A673 (cell line): ENCODE measurements at regions of chr21 and their contacts with region 1.

Region 1: GRCh38 chr21:41068967-41069642 is 98.9 kb upstream of the BACE2 start:
- DNase-seq: peak; percentile 56
- H3K4me3 ChIP-seq: no peak overlapping the region
- H3K27ac ChIP-seq: no peak overlapping the region
- H3K4me1 ChIP-seq: no peaks in the 10 kb centered on the region
- H3K27me3 ChIP-seq: no peaks in the 10 kb centered on the region
- CTCF ChIP-seq: peak; percentile 75

Region 2: GRCh38 chr21:40466893-40467501 is 602.1 kb before region 1 on chr21:
- CTCF ChIA-PET with region 1: no interaction called
- POLR2A ChIA-PET with region 1: no interaction called
- intact Hi-C with region 1: loop called (anchors 5 kb)
- DNase-seq: no peak
- H3K4me3 ChIP-seq: no peak overlapping the region
- H3K27ac ChIP-seq: no peak overlapping the region
- H3K4me1 ChIP-seq: no peaks in the 10 kb centered on the region
- H3K27me3 ChIP-seq: no peaks in the 10 kb centered on the region
- CTCF ChIP-seq: peak; percentile 42; the same call in 1 of the 2 replicates

Region 3: GRCh38 chr21:40964691-40965090 is 104.4 kb before region 1 on chr21:
- CTCF ChIA-PET with region 1: no interaction called
- POLR2A ChIA-PET with region 1: no interaction called
- intact Hi-C with region 1: no loop called
- DNase-seq: no peak
- H3K4me3 ChIP-seq: no peak overlapping the region
- H3K27ac ChIP-seq: no peak overlapping the region
- H3K4me1 ChIP-seq: no peaks in the 10 kb centered on the region
- H3K27me3 ChIP-seq: no peaks in the 10 kb centered on the region
- CTCF ChIP-seq: no peak

Region 4: DNA sequence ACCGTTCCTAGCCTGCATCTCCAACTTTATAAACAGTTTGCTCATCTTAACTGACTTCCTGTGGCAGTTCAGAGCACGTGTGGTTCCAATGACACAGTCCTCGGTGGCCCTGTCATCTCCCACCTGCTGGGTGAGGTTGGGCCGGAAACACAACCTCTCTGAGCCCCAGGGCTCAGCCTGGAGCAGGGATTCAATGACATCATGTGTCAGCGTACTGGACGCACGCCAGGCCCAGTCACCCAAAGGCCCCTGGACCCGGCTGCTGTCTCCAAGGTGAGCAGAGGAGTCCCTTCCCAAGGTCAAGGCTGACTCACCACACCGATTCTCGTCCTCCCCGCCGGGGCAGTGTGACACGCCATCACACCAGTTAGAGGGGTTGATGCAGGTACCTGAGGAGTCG is 419.0 kb after region 1 on chr21:
- CTCF ChIA-PET with region 1: no interaction called
- POLR2A ChIA-PET with region 1: no interaction called
- intact Hi-C with region 1: no loop called
- DNase-seq: no peak
- H3K4me3 ChIP-seq: no peak overlapping the region
- H3K27ac ChIP-seq: no peak overlapping the region
- H3K4me1 ChIP-seq: no peaks in the 10 kb centered on the region
- H3K27me3 ChIP-seq: no peaks in the 10 kb centered on the region
- CTCF ChIP-seq: no peak